GM12878 (cell line): ENCODE measurements at regions of chr12 and their contacts with region 1.

Region 1: DNA sequence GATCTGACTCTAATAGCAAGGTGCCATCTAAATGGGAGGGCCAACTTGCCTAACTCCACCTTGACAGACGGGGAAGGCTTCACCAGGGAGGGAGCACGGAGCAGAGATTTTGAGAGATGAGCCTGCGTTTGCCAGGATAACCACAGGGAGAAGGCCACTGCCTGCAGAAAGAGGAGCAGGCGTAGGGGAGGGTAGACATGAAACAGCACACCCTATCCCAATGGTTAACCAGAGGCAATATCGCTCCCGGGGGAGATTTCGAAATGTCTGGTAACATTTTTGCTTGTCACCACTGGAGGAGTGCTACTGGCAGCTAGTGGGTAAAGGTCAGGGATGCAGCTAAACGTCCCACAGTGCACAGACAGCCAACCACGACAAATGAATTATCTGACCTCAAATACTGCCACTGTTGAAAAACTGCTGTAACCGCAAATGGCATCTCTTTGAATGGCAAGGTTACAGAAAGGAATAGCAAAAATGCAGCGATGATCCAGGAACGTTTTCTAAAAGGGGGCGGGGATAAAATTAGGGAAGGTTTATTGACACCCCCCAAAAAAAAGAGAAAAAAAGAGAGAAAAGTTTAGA is 126.0 kb upstream of the ATF7IP start:
- DNase-seq: peak; percentile 86
- ATAC-seq: peak; percentile 90
- H3K4me3 ChIP-seq: peak overlapping the region; percentile 42; the same call in 1 of the 2 replicates
- H3K27ac ChIP-seq: peak overlapping the region; percentile 99
- H3K4me1 ChIP-seq: peaks cover 23% of the 10 kb centered on the region
- H3K27me3 ChIP-seq: no peaks in the 10 kb centered on the region
- CTCF ChIP-seq: peak; percentile 30 to 47 (median 30); a peak in 4 of 6 replicates
- EP300 ChIP-seq: peak; percentile 40 to 53; a peak in 2 of 4 replicates
- POLR2A ChIP-seq: no peak
- RAD21 ChIP-seq: peak; percentile 34; the same call in 1 of the 2 replicates

Region 2: GRCh38 chr12:14129611-14130195 is 109.7 kb before region 1 on chr12:
- CTCF ChIA-PET with region 1: no interaction called
- POLR2A ChIA-PET with region 1: no interaction called
- RAD21 ChIA-PET with region 1: no interaction called
- SMC1A ChIA-PET with region 1: no interaction called
- in situ Hi-C with region 1: no loop called
- intact Hi-C with region 1: no loop called
- DNase-seq: no peak
- ATAC-seq: no peak
- H3K4me3 ChIP-seq: no peak overlapping the region
- H3K27ac ChIP-seq: no peak overlapping the region
- H3K4me1 ChIP-seq: no peaks in the 10 kb centered on the region
- H3K27me3 ChIP-seq: no peaks in the 10 kb centered on the region
- CTCF ChIP-seq: no peak
- EP300 ChIP-seq: no peak
- POLR2A ChIP-seq: no peak
- RAD21 ChIP-seq: no peak

Region 3: GRCh38 chr12:14216405-14217294 is 22.8 kb before region 1 on chr12:
- CTCF ChIA-PET with region 1: interaction called, 21 read pairs
- POLR2A ChIA-PET with region 1: interaction called, 6 read pairs
- RAD21 ChIA-PET with region 1: interaction called, 14 read pairs
- SMC1A ChIA-PET with region 1: interaction called, 11 read pairs
- in situ Hi-C with region 1: no loop called
- intact Hi-C with region 1: no loop called
- DNase-seq: no peak
- ATAC-seq: peak; percentile 41; the same call in 1 of the 3 replicates
- H3K4me3 ChIP-seq: peak overlapping the region; percentile 10; the same call in 1 of the 2 replicates
- H3K27ac ChIP-seq: peak overlapping the region; percentile 14; the same call in 1 of the 2 replicates
- H3K4me1 ChIP-seq: peaks cover 3% of the 10 kb centered on the region; the same call in 1 of the 2 replicates
- H3K27me3 ChIP-seq: no peaks in the 10 kb centered on the region
- CTCF ChIP-seq: no peak
- EP300 ChIP-seq: no peak
- POLR2A ChIP-seq: no peak
- RAD21 ChIP-seq: no peak

Region 4: GRCh38 chr12:14284184-14284722 is 44.8 kb after region 1 on chr12:
- CTCF ChIA-PET with region 1: interaction called, 9 read pairs
- POLR2A ChIA-PET with region 1: interaction called, 7 read pairs
- RAD21 ChIA-PET with region 1: interaction called, 14 read pairs
- SMC1A ChIA-PET with region 1: interaction called, 17 read pairs
- in situ Hi-C with region 1: no loop called
- intact Hi-C with region 1: loop called (anchors 1 kb)
- DNase-seq: peak; percentile 40
- ATAC-seq: peak; percentile 86
- H3K4me3 ChIP-seq: peak overlapping the region; percentile 51; the same call in 1 of the 2 replicates
- H3K27ac ChIP-seq: peak overlapping the region; percentile 98
- H3K4me1 ChIP-seq: peaks cover 29% of the 10 kb centered on the region
- H3K27me3 ChIP-seq: no peaks in the 10 kb centered on the region
- CTCF ChIP-seq: 0 out of 6 replicates have a peak, but pooled peaks of 1 of the 3 experiments have one; percentile 18
- EP300 ChIP-seq: no peak
- POLR2A ChIP-seq: peak; percentile 72
- RAD21 ChIP-seq: peak; percentile 53

Region 5: GRCh38 chr12:14332482-14332881 is 93.0 kb after region 1 on chr12:
- CTCF ChIA-PET with region 1: no interaction called
- POLR2A ChIA-PET with region 1: no interaction called
- RAD21 ChIA-PET with region 1: no interaction called
- SMC1A ChIA-PET with region 1: no interaction called
- in situ Hi-C with region 1: no loop called
- intact Hi-C with region 1: no loop called
- DNase-seq: no peak
- ATAC-seq: no peak
- H3K4me3 ChIP-seq: no peak overlapping the region
- H3K27ac ChIP-seq: no peak overlapping the region
- H3K4me1 ChIP-seq: no peaks in the 10 kb centered on the region
- H3K27me3 ChIP-seq: no peaks in the 10 kb centered on the region
- CTCF ChIP-seq: no peak
- EP300 ChIP-seq: no peak
- POLR2A ChIP-seq: no peak
- RAD21 ChIP-seq: no peak

Region 6: GRCh38 chr12:14394317-14395073 is 155.1 kb after region 1 on chr12:
- CTCF ChIA-PET with region 1: interaction called, 7 read pairs
- POLR2A ChIA-PET with region 1: interaction called, 9 read pairs
- RAD21 ChIA-PET with region 1: interaction called, 53 read pairs
- SMC1A ChIA-PET with region 1: interaction called, 28 read pairs
- in situ Hi-C with region 1: no loop called
- intact Hi-C with region 1: loop called (anchors 5 kb)
- DNase-seq: peak; percentile 65
- ATAC-seq: peak; percentile 77
- H3K4me3 ChIP-seq: 0 out of 2 replicates have a peak overlapping the region, but pooled peaks have one; percentile 18
- H3K27ac ChIP-seq: peak overlapping the region; percentile 82
- H3K4me1 ChIP-seq: peaks cover 11% of the 10 kb centered on the region; the same call in 1 of the 2 replicates
- H3K27me3 ChIP-seq: no peaks in the 10 kb centered on the region
- CTCF ChIP-seq: no peak; a peak in 1 of 6 replicates
- EP300 ChIP-seq: no peak
- POLR2A ChIP-seq: 0 out of 2 replicates have a peak, but pooled peaks have one; percentile 22
- RAD21 ChIP-seq: no peak

Region 7: GRCh38 chr12:14577344-14577743 is 337.9 kb after region 1 on chr12:
- CTCF ChIA-PET with region 1: interaction called, 7 read pairs
- POLR2A ChIA-PET with region 1: no interaction called
- RAD21 ChIA-PET with region 1: interaction called, 7 read pairs
- SMC1A ChIA-PET with region 1: interaction called, 12 read pairs
- in situ Hi-C with region 1: no loop called
- intact Hi-C with region 1: no loop called
- DNase-seq: peak; percentile 25
- ATAC-seq: peak; percentile 72
- H3K4me3 ChIP-seq: no peak overlapping the region
- H3K27ac ChIP-seq: no peak overlapping the region
- H3K4me1 ChIP-seq: peaks cover 2% of the 10 kb centered on the region; the same call in 1 of the 2 replicates
- H3K27me3 ChIP-seq: no peaks in the 10 kb centered on the region
- CTCF ChIP-seq: no peak
- EP300 ChIP-seq: no peak
- POLR2A ChIP-seq: no peak
- RAD21 ChIP-seq: no peak

Region 8: DNA sequence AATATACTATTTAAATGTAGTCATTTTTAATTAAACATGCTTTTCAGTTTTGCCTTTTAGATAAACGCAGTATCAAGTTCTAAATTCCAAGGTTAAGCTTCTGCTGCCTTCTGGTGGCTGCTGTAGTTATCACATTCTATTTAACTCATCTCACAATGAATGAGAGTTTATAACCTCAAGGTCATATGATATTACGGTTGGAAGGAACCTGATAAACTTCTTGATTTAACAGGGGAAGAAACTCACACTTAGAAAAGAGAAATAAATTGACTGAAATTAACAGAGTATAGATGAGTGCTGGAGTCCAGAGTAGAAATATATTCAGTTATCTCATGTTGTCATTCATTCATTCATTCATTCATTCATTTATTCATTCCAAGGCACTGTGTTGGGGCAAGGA is 425.1 kb after region 1 on chr12:
- CTCF ChIA-PET with region 1: interaction called, 41 read pairs
- POLR2A ChIA-PET with region 1: no interaction called
- RAD21 ChIA-PET with region 1: interaction called, 31 read pairs
- SMC1A ChIA-PET with region 1: interaction called, 73 read pairs
- in situ Hi-C with region 1: no loop called
- intact Hi-C with region 1: loop called (anchors 1 kb)
- DNase-seq: no peak
- ATAC-seq: peak; percentile 71
- H3K4me3 ChIP-seq: no peak overlapping the region
- H3K27ac ChIP-seq: no peak overlapping the region
- H3K4me1 ChIP-seq: no peaks in the 10 kb centered on the region
- H3K27me3 ChIP-seq: no peaks in the 10 kb centered on the region
- CTCF ChIP-seq: peak; percentile 50 to 72 (median 56); a peak in 5 of 6 replicates
- EP300 ChIP-seq: no peak
- POLR2A ChIP-seq: no peak
- RAD21 ChIP-seq: peak; percentile 93

Region 9: GRCh38 chr12:14995583-14996425 is 756.4 kb after region 1 on chr12:
- CTCF ChIA-PET with region 1: interaction called, 11 read pairs
- POLR2A ChIA-PET with region 1: no interaction called
- RAD21 ChIA-PET with region 1: interaction called, 3 read pairs
- SMC1A ChIA-PET with region 1: interaction called, 3 read pairs
- in situ Hi-C with region 1: loop called (anchors 10 kb)
- intact Hi-C with region 1: loop called (anchors 10 kb)
- DNase-seq: peak; percentile 34
- ATAC-seq: peak; percentile 64
- H3K4me3 ChIP-seq: no peak overlapping the region
- H3K27ac ChIP-seq: no peak overlapping the region
- H3K4me1 ChIP-seq: peaks cover 6% of the 10 kb centered on the region; the same call in 1 of the 2 replicates
- H3K27me3 ChIP-seq: no peaks in the 10 kb centered on the region
- CTCF ChIP-seq: peak; percentile 34 to 62 (median 42); a peak in 4 of 6 replicates
- EP300 ChIP-seq: no peak
- POLR2A ChIP-seq: no peak
- RAD21 ChIP-seq: peak; percentile 87